AG04449 (cell line): ENCODE measurements at regions of chr6 and their contacts with region 1.

Region 1: GRCh38 chr6:75893058-75893775 is 144.2 kb downstream of the MYO6 start:
- DNase-seq: peak; percentile 28
- H3K4me3 ChIP-seq: no peak overlapping the region
- CTCF ChIP-seq: peak; percentile 46

Region 2: DNA sequence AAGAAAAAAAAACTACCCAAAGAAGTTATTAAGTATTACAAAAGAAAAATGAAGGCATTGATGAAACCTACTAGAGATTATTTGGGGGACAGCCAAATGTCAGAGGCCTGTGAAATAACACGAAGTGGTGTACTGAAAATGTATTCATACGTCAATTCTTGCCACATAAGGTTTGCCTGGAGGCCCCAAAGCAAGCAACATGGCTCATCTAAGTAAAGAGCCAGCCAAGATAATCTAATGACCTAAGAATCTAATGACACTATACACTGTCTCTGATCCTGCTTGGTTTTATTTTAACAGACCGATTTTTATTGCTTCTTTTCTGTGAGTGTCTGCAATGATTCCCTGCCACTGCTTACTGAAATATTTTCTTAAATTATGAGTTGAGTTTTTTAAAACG is 434.3 kb before region 1 on chr6:
- CTCF ChIA-PET with region 1: no interaction called
- POLR2A ChIA-PET with region 1: no interaction called
- DNase-seq: peak; percentile 47
- H3K4me3 ChIP-seq: no peak overlapping the region
- CTCF ChIP-seq: no peak

Region 3: GRCh38 chr6:75855052-75855451 is 38.2 kb before region 1 on chr6:
- CTCF ChIA-PET with region 1: interaction called, 15 read pairs
- POLR2A ChIA-PET with region 1: no interaction called
- DNase-seq: peak; percentile 12
- H3K4me3 ChIP-seq: no peak overlapping the region
- CTCF ChIP-seq: peak; percentile 45

Region 4: GRCh38 chr6:75876152-75876551 is 17.1 kb before region 1 on chr6:
- CTCF ChIA-PET with region 1: interaction called, 56 read pairs
- POLR2A ChIA-PET with region 1: no interaction called
- DNase-seq: no peak
- H3K4me3 ChIP-seq: no peak overlapping the region
- CTCF ChIP-seq: no peak

Region 5: GRCh38 chr6:75906871-75907270 is 13.7 kb after region 1 on chr6:
- CTCF ChIA-PET with region 1: interaction called, 64 read pairs
- POLR2A ChIA-PET with region 1: no interaction called
- DNase-seq: no peak
- H3K4me3 ChIP-seq: no peak overlapping the region
- CTCF ChIP-seq: no peak

Region 6: DNA sequence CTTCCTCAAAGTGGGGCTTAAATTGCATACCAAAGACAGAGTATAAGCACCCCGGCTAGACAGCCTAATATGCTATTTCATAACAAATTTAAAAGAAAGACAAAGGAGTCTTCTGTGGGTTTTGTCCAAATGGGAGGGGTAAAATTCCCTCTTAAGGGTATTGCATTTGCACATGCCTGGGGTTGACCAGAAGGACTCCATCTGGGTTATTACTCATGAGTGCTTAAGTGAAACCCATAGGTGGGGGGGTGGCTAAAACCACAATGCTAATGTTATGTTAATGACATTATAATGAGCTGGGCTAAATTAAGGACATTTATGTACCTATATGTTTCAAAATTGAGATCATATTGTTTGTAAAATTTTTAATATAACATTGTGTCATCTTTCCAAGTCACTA is 164.3 kb after region 1 on chr6:
- CTCF ChIA-PET with region 1: no interaction called
- POLR2A ChIA-PET with region 1: no interaction called
- DNase-seq: no peak
- H3K4me3 ChIP-seq: no peak overlapping the region
- CTCF ChIP-seq: no peak

Region 7: DNA sequence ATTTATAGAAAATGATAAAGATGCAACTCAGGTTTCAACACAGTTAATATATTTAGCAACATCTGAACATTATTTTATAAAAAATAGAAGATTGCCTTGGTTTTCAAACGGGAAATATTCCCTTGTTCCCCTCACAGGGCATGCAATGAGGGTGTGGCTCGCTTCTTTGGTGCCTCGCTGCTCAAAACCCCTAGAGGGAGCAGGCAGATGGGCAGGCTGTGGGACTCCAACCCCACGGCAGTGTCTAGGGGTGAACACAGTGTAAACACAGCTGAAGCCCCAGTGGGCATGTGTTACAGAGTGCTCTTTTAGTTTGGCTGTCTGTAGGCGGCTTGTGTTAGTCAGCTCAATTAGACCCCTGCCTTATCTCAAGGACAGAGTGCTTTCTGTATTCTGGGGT is 740.0 kb after region 1 on chr6:
- CTCF ChIA-PET with region 1: no interaction called
- POLR2A ChIA-PET with region 1: no interaction called
- DNase-seq: no peak
- H3K4me3 ChIP-seq: no peak overlapping the region
- CTCF ChIP-seq: no peak

Region 8: GRCh38 chr6:77457720-77458349 is 1564.6 kb after region 1 on chr6:
- CTCF ChIA-PET with region 1: interaction called, 23 read pairs
- POLR2A ChIA-PET with region 1: interaction called, 3 read pairs
- DNase-seq: peak; percentile 80
- H3K4me3 ChIP-seq: no peak overlapping the region
- CTCF ChIP-seq: peak; percentile 71